GM12878 (cell line): ENCODE measurements at regions of chr18 and their contacts with region 1.

Region 1: GRCh38 chr18:63422087-63422809 is at the start of gene VPS4B:
- DNase-seq: peak; percentile 98
- ATAC-seq: peak; percentile 97
- H3K4me3 ChIP-seq: peak within 1 kb of the TSS; percentile 90
- H3K27ac ChIP-seq: peak within 1 kb of the TSS; percentile 94
- H3K4me1 ChIP-seq: no peaks in the 10 kb centered on the region
- H3K27me3 ChIP-seq: no peaks in the 10 kb centered on the region
- CTCF ChIP-seq: no peak
- EP300 ChIP-seq: no peak
- POLR2A ChIP-seq: peak; percentile 90
- RAD21 ChIP-seq: no peak
- polyA plus RNA-seq, gene VPS4B: 25.7 to 29.9 TPM

Region 2: DNA sequence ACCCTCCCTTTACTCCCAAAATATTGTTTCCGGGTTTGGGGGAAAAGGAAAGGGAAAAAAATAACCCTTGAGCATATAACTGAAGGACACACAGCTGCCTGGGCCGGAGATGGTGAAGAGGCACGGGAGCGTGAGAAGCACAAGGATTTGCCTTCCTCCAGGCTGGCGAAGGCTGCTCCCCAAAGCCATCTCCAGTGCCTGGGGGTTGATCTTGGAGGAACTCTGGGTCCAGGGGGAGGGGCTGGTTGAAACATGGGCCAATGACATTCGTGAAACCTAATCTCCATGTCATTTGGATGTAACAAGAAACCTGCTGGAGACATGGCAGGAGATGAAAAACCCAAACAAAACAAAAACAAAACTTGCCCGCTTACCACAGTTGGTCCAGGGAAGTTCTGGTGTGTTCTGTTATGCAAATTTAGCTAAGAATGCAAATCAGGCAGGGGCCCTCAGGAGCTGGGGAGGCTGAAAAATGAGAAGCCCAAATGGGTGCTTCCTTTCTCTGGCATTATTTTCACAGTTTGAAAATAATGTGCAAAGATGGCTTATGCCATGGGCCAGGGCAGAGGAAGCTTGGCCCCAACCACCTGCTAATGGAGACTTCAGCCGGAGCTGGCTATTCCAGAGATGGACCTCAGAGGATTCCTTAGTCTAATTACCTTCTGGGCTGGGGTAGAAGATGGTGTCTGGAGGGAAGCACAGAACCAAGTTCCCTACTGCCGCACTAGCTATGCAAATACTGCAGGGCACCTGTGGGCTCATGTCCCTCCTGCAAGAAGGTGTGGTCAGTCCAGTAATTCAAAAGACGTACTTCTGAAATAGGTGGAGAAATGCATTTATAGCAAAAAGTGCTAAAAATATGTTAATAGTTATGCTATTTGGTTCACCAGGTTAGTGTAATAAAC is 283.6 kb before region 1 on chr18:
- CTCF ChIA-PET with region 1: no interaction called
- POLR2A ChIA-PET with region 1: no interaction called
- RAD21 ChIA-PET with region 1: no interaction called
- SMC1A ChIA-PET with region 1: no interaction called
- in situ Hi-C with region 1: loop called (anchors 5 kb)
- intact Hi-C with region 1: loop called (anchors 5 kb)
- DNase-seq: peak; percentile 94
- ATAC-seq: peak; percentile 58
- H3K4me3 ChIP-seq: peak overlapping the region; percentile 65
- H3K27ac ChIP-seq: peak overlapping the region; percentile 96
- H3K4me1 ChIP-seq: peaks cover 72% of the 10 kb centered on the region
- H3K27me3 ChIP-seq: no peaks in the 10 kb centered on the region
- CTCF ChIP-seq: no peak
- EP300 ChIP-seq: peak in 1 of 2 experiments; percentile 69; a peak in 1 of 4 replicates
- POLR2A ChIP-seq: peak; percentile 74
- RAD21 ChIP-seq: no peak

Region 3: GRCh38 chr18:63367053-63367953 is 54.9 kb before region 1 on chr18 and contains the start of gene KDSR:
- CTCF ChIA-PET with region 1: interaction called, 3 read pairs
- POLR2A ChIA-PET with region 1: interaction called, 10 read pairs
- RAD21 ChIA-PET with region 1: interaction called, 5 read pairs
- SMC1A ChIA-PET with region 1: interaction called, 3 read pairs
- in situ Hi-C with region 1: no loop called
- intact Hi-C with region 1: loop called (anchors 1 kb)
- DNase-seq: peak; percentile 53
- ATAC-seq: peak; percentile 92
- H3K4me3 ChIP-seq: peak within 1 kb of the TSS; percentile 93
- H3K27ac ChIP-seq: peak within 1 kb of the TSS; percentile 84
- H3K4me1 ChIP-seq: no peaks in the 10 kb centered on the region
- H3K27me3 ChIP-seq: no peaks in the 10 kb centered on the region
- CTCF ChIP-seq: no peak
- EP300 ChIP-seq: no peak
- POLR2A ChIP-seq: peak; percentile 84
- RAD21 ChIP-seq: no peak
- polyA plus RNA-seq, gene KDSR: 5.2 to 7.8 TPM